ENCODE measurements at regions of chr11 and their contacts with region 1.

Region 1: GRCh38 chr11:117281159-117281558 is 10.0 kb upstream of the BACE1-AS start:
- DNase-seq: no peak
- H3K4me3 ChIP-seq: peak overlapping the region in 1 of 2 donors; percentile 58
- H3K4me3 Mint-ChIP-seq: peak overlapping the region; percentile 69 to 95 (median 90)
- H3K27ac ChIP-seq: peak overlapping the region; percentile 17
- H3K27ac Mint-ChIP-seq: peak overlapping the region in 6 of 7 donors; percentile 39 to 97 (median 86)
- H3K4me1 ChIP-seq: peaks cover 58% of the 10 kb centered on the region
- H3K4me1 Mint-ChIP-seq: peaks cover 41 to 81% (median 57%) of the 10 kb centered on the region in 4 donors
- H3K27me3 ChIP-seq: no peaks in the 10 kb centered on the region
- H3K27me3 Mint-ChIP-seq: no peaks in the 10 kb centered on the region

Region 2: GRCh38 chr11:117232092-117232878 is 48.9 kb before region 1 on chr11 and contains the start of gene RNF214:
- CTCF ChIA-PET with region 1: interaction called, 11 read pairs
- POLR2A ChIA-PET with region 1: interaction called, 35 read pairs
- intact Hi-C with region 1: loop called (anchors 2 kb)
- DNase-seq: peak; percentile 65 to 83 (median 75)
- H3K4me3 ChIP-seq: peak within 1 kb of the TSS; percentile 87 to 93
- H3K4me3 Mint-ChIP-seq: peak within 1 kb of the TSS; percentile 97 to 100 (median 99)
- H3K27ac ChIP-seq: peak within 1 kb of the TSS; percentile 90
- H3K27ac Mint-ChIP-seq: peak within 1 kb of the TSS; percentile 95 to 100 (median 99)
- H3K4me1 ChIP-seq: peaks cover 47% of the 10 kb centered on the region
- H3K4me1 Mint-ChIP-seq: peaks cover 27 to 62% (median 49%) of the 10 kb centered on the region in 4 donors
- H3K27me3 ChIP-seq: no peaks in the 10 kb centered on the region
- H3K27me3 Mint-ChIP-seq: no peaks in the 10 kb centered on the region
- total RNA-seq, gene RNF214: 41.8 to 50.1 TPM

Region 3: GRCh38 chr11:117316197-117316961 is 35.2 kb after region 1 on chr11 and contains the start of gene BACE1:
- CTCF ChIA-PET with region 1: no interaction called
- POLR2A ChIA-PET with region 1: interaction called, 13 read pairs
- intact Hi-C with region 1: no loop called
- DNase-seq: peak in 3 of 5 donors; percentile 5 to 17 (median 11)
- H3K4me3 ChIP-seq: peak within 1 kb of the TSS; percentile 39 to 63
- H3K4me3 Mint-ChIP-seq: peak within 1 kb of the TSS; percentile 86 to 92 (median 89)
- H3K27ac ChIP-seq: peak within 1 kb of the TSS; percentile 26
- H3K27ac Mint-ChIP-seq: peak within 1 kb of the TSS in 5 of 7 donors; percentile 39 to 89 (median 68)
- H3K4me1 ChIP-seq: peaks cover 17% of the 10 kb centered on the region
- H3K4me1 Mint-ChIP-seq: peaks cover 4 to 19% (median 12%) of the 10 kb centered on the region in 4 donors
- H3K27me3 ChIP-seq: peaks cover 7% of the 10 kb centered on the region
- H3K27me3 Mint-ChIP-seq: peaks cover 3 to 7% of the 10 kb centered on the region in 2 donors
- total RNA-seq, gene BACE1: 2.7 to 2.9 TPM